Activated naive CD4-positive, alpha-beta T cell treated with anti-CD3 and anti-CD28 coated beads for 36 hours (primary cell): ENCODE measurements at regions of chr2 and their contacts with region 1.

Region 1: DNA sequence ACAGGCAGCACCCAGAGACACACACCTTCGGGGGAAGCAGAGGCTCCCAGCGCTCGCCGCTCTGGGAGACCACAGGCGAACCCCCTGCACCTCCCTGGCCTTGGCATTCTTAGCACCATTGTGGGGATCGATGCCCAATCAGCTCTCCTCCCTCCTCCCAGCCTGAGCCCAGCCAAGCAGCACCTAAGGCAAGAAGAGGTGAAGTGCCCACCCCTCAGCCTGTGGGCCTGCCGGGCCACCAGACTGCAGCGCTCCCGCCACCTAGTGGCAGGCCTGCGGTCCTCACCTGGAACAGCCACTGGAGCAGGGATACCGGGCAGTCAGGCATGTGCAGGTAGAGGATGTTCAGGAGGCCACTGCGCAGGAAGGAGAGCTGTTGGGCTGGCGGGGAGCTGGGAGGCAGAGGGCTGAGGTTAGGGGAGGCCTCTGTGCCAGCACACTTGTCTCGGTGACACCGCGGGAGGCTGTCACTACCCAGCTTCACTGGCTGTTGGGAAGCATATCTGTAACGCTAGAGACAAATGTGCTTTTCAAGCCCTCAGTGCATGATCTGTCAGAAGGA is 35.2 kb downstream of the FAM178B start:
- DNase-seq: peak; percentile 81
- H3K4me3 Mint-ChIP-seq: no peak overlapping the region
- H3K27ac Mint-ChIP-seq: no peak overlapping the region
- H3K4me1 Mint-ChIP-seq: peaks cover 17% of the 10 kb centered on the region
- H3K27me3 Mint-ChIP-seq: no peaks in the 10 kb centered on the region

Region 2: GRCh38 chr2:96874118-96874831 is 76.9 kb before region 1 on chr2:
- CTCF ChIA-PET with region 1: interaction called, 11 read pairs
- intact Hi-C with region 1: no loop called
- DNase-seq: peak; percentile 43
- H3K4me3 Mint-ChIP-seq: no peak overlapping the region
- H3K27ac Mint-ChIP-seq: peak overlapping the region; percentile 38
- H3K4me1 Mint-ChIP-seq: peaks cover 40% of the 10 kb centered on the region
- H3K27me3 Mint-ChIP-seq: peaks cover 6% of the 10 kb centered on the region

Region 3: DNA sequence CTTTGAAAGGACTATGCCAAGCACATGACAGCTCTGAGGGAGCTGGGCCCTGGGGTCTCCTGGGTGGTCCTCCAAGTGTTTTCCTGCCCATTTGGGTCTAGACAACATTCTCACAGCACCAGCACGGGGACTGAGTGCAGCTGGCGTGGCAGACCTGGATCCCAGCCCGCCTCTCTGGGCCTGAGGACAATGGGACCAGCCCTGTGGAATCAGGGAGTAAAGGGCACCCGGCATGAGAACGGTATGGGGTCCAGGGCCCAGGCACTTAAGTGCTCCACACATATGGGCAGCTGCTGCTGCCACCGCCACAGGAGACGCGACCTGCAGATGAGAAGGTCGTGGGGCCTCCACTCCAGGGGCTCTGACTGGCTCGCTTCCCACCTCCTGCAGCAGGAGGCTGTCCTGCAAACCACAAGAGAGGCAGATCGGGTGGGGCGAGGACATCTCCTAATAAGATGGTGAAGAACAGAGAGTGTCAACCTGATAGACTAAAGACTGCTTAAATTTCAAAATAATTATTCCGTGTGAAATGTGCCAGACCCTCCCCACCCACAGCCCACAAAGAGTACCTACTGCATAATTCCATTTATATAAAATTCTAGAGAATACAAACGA is 11.1 kb before region 1 on chr2:
- CTCF ChIA-PET with region 1: interaction called, 56 read pairs
- intact Hi-C with region 1: no loop called
- DNase-seq: no peak
- H3K4me3 Mint-ChIP-seq: no peak overlapping the region
- H3K27ac Mint-ChIP-seq: no peak overlapping the region
- H3K4me1 Mint-ChIP-seq: peaks cover 29% of the 10 kb centered on the region
- H3K27me3 Mint-ChIP-seq: no peaks in the 10 kb centered on the region